ENCODE measurements at regions of chr4 and their contacts with region 1.

Region 1: DNA sequence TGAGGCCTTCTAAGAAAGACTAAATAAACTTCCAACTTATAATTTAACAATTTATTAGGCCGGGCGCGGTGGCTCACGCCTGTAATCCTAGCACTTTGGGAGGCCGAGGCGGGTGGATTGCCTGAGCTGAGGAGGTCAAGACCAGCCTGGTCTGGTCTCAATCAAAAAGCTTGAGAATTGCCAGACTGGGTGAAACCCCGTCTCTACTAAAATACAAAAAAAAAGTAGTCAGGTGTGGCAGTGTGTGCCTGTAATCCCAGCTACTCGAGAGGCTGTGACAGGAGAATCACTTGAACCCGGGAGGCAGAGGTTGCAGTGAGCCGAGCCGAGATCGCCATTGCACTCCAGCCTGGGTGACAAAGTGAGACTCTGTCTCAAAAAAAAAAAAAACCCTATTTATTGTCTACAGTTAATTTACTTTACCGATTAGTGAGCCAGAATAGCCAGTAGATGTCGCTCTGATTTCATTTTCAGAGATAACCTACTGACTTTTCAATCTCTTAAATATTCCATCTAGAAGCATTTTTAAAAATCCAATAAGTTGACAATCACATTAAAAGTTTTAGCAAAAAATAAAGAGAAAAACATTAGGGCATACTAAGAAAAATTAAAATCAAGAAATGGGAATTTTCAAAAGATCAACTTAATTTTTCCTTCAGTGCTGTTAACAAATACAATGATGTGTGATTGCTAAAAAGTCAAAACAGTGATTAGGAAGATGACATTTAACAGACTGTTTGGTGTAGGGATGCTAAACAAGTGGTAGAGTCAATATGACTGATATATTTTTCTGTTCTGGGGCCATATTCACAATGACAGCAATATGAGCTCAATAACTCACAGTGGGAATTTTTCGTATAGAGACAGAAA is 4.3 kb upstream of the SHROOM3 start:
- DNase-seq: peak; percentile 62 to 78 (median 73)
- H3K4me3 ChIP-seq: peak overlapping the region in 2 of 7 experiments; percentile 11 to 46
- H3K27ac ChIP-seq: no peak overlapping the region
- H3K4me1 ChIP-seq: peaks cover 0 to 5% (median 1%) of the 10 kb centered on the region in 4 experiments
- H3K27me3 ChIP-seq: peaks cover 0 to 6% (median 0%) of the 10 kb centered on the region in 5 experiments

Region 2: DNA sequence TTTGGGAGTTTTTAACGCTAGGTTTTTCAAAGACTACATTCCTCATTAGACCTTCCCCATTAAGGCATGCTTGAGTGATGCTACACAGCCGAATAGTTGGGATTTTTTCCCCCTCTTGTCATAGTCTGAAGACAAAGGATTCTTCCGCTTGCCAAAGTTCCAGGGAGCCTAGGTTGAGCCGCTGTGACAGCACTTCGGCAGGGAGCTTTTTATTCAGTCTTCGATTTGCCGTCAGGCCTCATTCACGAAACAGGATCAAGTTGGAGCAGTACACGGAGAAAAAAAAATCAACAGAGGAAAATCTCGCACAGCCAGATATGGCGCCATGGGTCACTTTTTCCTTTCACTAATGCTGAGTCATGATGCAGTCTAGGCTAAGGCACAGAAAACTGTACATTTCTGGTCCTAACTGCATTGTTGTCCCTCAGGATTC is 28.6 kb after region 1 on chr4:
- CTCF ChIA-PET with region 1: no interaction called
- POLR2A ChIA-PET with region 1: no interaction called
- DNase-seq: no peak
- H3K4me3 ChIP-seq: no peak overlapping the region
- H3K27ac ChIP-seq: no peak overlapping the region
- H3K4me1 ChIP-seq: no peaks in the 10 kb centered on the region
- H3K27me3 ChIP-seq: no peaks in the 10 kb centered on the region

Region 3: GRCh38 chr4:76504613-76505465 is 74.1 kb after region 1 on chr4:
- CTCF ChIA-PET with region 1: interaction called, 105 read pairs
- POLR2A ChIA-PET with region 1: no interaction called
- DNase-seq: peak; percentile 55 to 79 (median 73)
- H3K4me3 ChIP-seq: no peak overlapping the region
- H3K27ac ChIP-seq: no peak overlapping the region
- H3K4me1 ChIP-seq: no peaks in the 10 kb centered on the region
- H3K27me3 ChIP-seq: peaks cover 0 to 3% (median 0%) of the 10 kb centered on the region in 5 experiments

Measured in common myeloid progenitor, CD34-positive (primary cell).